Mammary epithelial cell (primary cell): ENCODE measurements at regions of chr3 and their contacts with region 1.

Region 1: GRCh38 chr3:131381444-131382291 is at the start of gene NUDT16:
- DNase-seq: peak; percentile 99
- H3K4me3 ChIP-seq: peak within 1 kb of the TSS; percentile 61 to 98 (median 84)
- H3K27ac ChIP-seq: peak within 1 kb of the TSS; percentile 59
- H3K4me1 ChIP-seq: peaks cover 9% of the 10 kb centered on the region
- H3K27me3 ChIP-seq: no peaks in the 10 kb centered on the region
- CTCF ChIP-seq: no peak
- total RNA-seq, gene NUDT16: 7.8 to 13.2 TPM

Region 2: DNA sequence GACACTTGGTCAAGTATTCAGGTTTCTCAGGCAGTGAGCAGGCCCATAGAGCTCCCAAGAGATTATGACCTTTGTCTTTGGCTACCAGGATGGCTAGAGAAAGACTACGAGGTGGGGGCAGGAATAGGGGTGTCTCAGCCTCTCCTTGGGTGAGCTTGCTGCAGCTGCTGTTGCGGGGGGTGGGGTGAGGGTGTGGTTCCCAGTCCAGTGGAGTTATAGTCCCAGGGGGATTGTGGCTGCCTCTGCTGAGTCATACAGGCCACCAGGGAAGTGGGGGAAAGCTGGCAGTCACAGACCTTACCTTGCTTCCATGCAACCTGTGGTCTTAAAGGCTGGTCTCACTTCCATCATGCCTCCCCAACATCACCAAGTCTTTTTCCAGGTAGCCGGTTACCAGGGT is 456.0 kb before region 1 on chr3:
- CTCF ChIA-PET with region 1: no interaction called
- dilution Hi-C with region 1: no loop called
- in situ Hi-C with region 1: no loop called
- intact Hi-C with region 1: no loop called
- DNase-seq: no peak
- H3K4me3 ChIP-seq: no peak overlapping the region
- H3K27ac ChIP-seq: no peak overlapping the region
- H3K4me1 ChIP-seq: no peaks in the 10 kb centered on the region
- H3K27me3 ChIP-seq: no peaks in the 10 kb centered on the region
- CTCF ChIP-seq: no peak

Region 3: GRCh38 chr3:131026321-131027178 is 355.1 kb before region 1 on chr3 and contains the starts of genes ASTE1 and NEK11:
- CTCF ChIA-PET with region 1: no interaction called
- dilution Hi-C with region 1: no loop called
- in situ Hi-C with region 1: no loop called
- intact Hi-C with region 1: loop called (anchors 5 kb)
- DNase-seq: peak; percentile 87
- H3K4me3 ChIP-seq: peak within 1 kb of the TSS; percentile 68 to 81 (median 78)
- H3K27ac ChIP-seq: peak within 1 kb of the TSS; percentile 97
- H3K4me1 ChIP-seq: peaks cover 4% of the 10 kb centered on the region
- H3K27me3 ChIP-seq: no peaks in the 10 kb centered on the region
- CTCF ChIP-seq: peak in 1 of 2 donors; percentile 4
- total RNA-seq, gene ASTE1: 4.4 to 6.3 TPM
- total RNA-seq, gene NEK11: 7.7 to 20.2 TPM

Region 4: GRCh38 chr3:131216801-131217200 is 164.9 kb before region 1 on chr3:
- CTCF ChIA-PET with region 1: no interaction called
- dilution Hi-C with region 1: no loop called
- in situ Hi-C with region 1: no loop called
- intact Hi-C with region 1: loop called (anchors 10 kb)
- DNase-seq: peak; percentile 66
- H3K4me3 ChIP-seq: no peak overlapping the region
- H3K27ac ChIP-seq: peak overlapping the region; percentile 64
- H3K4me1 ChIP-seq: peaks cover 23% of the 10 kb centered on the region
- H3K27me3 ChIP-seq: no peaks in the 10 kb centered on the region
- CTCF ChIP-seq: no peak

Region 5: DNA sequence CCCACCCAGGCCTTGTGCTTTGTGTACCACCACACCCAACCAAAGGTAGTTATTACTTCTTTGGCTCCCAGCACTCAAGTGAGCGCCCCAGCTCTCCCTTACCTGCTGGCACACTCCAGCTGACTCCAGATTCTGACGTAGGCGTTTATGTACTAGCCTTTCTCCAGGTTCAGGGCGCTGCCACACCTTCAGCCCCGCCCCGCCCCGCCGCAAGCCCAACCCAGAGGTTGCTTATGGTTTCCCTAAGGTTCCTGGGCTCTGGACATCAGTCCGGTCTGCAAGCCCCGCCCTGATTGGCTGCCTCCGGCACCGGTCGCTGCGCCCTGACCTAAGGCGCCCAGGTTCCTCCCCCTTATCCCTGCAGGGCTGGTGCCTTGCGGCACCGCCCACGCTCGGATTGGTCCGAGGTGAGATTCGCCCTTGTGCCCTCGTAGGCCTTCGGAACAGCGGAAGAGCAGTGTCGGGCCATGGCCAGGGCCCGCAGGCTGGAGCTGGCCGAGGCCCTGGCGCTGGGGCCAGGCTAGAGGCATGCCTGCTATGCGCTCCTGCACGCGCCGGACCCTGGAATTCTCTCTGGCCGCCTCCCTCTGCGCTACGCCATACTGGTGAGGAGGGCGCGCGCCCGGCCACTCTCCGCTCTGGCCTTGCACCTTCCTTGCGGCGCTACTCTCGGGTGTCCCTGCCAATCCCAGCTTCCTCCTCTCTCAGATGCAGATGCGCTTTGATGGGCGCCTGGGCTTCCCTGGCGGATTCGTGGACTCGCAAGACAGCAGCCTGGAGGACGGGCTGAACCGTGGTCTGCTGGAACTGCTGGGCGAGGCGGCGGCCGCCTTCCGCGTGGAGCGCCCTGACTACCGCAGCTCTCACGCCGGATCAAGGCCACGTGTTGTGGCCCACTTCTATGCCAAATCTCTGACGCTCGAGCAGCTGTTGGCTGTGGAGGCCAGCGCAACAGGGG is 19.9 kb before region 1 on chr3:
- CTCF ChIA-PET with region 1: no interaction called
- dilution Hi-C with region 1: no loop called
- in situ Hi-C with region 1: no loop called
- intact Hi-C with region 1: no loop called
- DNase-seq: peak; percentile 65
- H3K4me3 ChIP-seq: peak overlapping the region in 2 of 3 experiments; percentile 33 to 42
- H3K27ac ChIP-seq: no peak overlapping the region
- H3K4me1 ChIP-seq: peaks cover 8% of the 10 kb centered on the region
- H3K27me3 ChIP-seq: no peaks in the 10 kb centered on the region
- CTCF ChIP-seq: no peak

Region 6: DNA sequence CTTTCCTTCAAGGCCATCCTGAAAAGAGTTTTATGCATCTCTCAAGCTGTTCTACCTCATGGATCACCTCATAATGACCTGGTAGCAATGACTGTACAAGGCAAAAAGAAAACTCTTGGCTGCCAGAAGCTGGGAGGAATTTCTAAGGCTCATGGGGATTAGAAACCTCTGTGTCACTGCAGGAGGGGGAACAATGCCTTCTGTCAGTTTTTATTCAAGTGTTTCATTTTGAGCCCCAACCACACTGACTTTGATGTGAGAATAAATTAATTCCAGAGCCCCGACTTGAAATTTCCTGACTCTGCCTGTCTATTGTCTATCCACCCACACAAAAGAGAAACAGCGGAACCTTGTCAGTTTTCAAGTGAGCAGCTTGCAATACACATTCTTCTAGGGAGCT is 179.8 kb after region 1 on chr3:
- CTCF ChIA-PET with region 1: no interaction called
- dilution Hi-C with region 1: no loop called
- in situ Hi-C with region 1: no loop called
- intact Hi-C with region 1: no loop called
- DNase-seq: peak; percentile 20
- H3K4me3 ChIP-seq: no peak overlapping the region
- H3K27ac ChIP-seq: no peak overlapping the region
- H3K4me1 ChIP-seq: no peaks in the 10 kb centered on the region
- H3K27me3 ChIP-seq: no peaks in the 10 kb centered on the region
- CTCF ChIP-seq: no peak